Prostate gland (tissue), 2 donors: ENCODE measurements at regions of chr9 and their contacts with region 1.

Region 1: DNA sequence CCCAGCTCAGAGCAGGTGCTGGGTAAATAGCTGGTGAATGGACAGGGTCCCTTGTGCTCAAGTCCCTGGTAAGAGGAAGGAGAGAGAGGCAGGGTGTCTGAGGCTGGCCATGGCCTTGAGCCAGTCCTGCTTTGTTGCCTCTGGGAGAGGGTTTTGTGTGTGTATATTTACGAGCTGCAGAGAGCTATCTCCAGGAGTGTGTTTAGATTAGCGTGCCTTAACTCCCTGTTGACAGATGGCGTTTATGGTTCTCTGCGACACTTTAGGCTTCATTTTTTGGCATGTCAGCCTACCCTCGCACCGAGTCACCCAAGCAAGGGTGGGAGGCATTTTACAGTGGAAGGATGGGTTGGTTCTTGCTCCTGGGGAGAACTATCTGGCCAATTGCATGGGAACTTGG is 22.2 kb downstream of the HMCN2 start:
- DNase-seq: peak; percentile 53
- H3K4me3 ChIP-seq: no peak overlapping the region
- H3K27ac ChIP-seq: no peak overlapping the region
- H3K4me1 ChIP-seq: no peaks in the 10 kb centered on the region
- H3K27me3 ChIP-seq: peaks cover 9% of the 10 kb centered on the region
- CTCF ChIP-seq: no peak
- POLR2A ChIP-seq: no peak

Region 2: GRCh38 chr9:130254752-130255630 is 32.7 kb before region 1 on chr9:
- intact Hi-C with region 1: no loop called
- DNase-seq: no peak
- H3K4me3 ChIP-seq: no peak overlapping the region
- H3K27ac ChIP-seq: no peak overlapping the region
- H3K4me1 ChIP-seq: no peaks in the 10 kb centered on the region
- H3K27me3 ChIP-seq: no peaks in the 10 kb centered on the region
- CTCF ChIP-seq: no peak
- POLR2A ChIP-seq: no peak

Region 3: DNA sequence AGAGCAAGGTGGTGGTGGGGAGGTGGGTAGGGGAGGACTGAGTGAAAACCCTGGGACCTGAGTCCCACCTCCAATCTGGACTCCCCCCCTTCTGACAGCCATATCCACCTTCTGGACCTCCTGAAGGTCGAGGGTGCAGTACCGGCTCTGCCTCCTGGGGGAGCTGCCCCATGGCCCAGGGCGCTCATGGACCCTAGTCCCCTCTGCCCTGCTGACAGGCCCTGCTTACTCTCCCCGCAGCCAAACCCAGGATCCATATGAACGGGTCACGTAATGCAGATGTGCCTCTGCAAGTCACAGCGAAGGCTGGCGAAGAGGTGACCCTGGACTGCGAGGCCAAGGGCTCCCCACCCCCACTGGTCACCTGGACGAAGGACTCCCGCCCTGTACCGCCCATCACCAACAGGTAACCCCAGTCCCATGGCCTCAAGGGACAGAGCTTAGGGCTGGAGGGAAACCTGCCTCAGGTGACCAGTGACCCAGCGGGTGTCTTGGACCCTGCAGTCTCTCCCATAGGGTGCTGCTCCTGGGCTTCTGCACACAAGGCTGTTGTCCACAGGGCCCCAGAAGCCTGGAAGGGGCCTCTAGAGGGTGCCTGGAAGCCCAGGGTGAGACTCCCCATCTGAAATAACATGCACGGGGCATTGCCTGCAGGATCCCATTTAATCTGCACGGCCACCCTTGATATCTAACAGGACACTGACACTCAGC is 39.5 kb after region 1 on chr9:
- intact Hi-C with region 1: loop called (anchors 5 kb)
- DNase-seq: no peak
- H3K4me3 ChIP-seq: no peak overlapping the region
- H3K27ac ChIP-seq: peak overlapping the region; percentile 64 to 73
- H3K4me1 ChIP-seq: no peaks in the 10 kb centered on the region
- H3K27me3 ChIP-seq: peaks cover 3% of the 10 kb centered on the region
- CTCF ChIP-seq: peak in 1 of 4 experiments; percentile 14
- POLR2A ChIP-seq: no peak